Naive thymus-derived CD4-positive, alpha-beta T cell (primary cell): ENCODE measurements at regions of chr3 and their contacts with region 1.

Region 1: GRCh38 chr3:149771652-149772271 is 19.5 kb upstream of the COMMD2 start:
- DNase-seq: peak in 5 of 9 donors; percentile 1 to 30 (median 13)
- ATAC-seq: no peak
- H3K4me3 ChIP-seq: no peak overlapping the region
- H3K4me3 Mint-ChIP-seq: no peak overlapping the region
- H3K27ac ChIP-seq: no peak overlapping the region
- H3K27ac Mint-ChIP-seq: no peak overlapping the region
- H3K4me1 ChIP-seq: no peaks in the 10 kb centered on the region
- H3K4me1 Mint-ChIP-seq: no peaks in the 10 kb centered on the region
- H3K27me3 ChIP-seq: no peaks in the 10 kb centered on the region
- H3K27me3 Mint-ChIP-seq: peaks cover 6 to 17% (median 11%) of the 10 kb centered on the region in 5 donors

Region 2: DNA sequence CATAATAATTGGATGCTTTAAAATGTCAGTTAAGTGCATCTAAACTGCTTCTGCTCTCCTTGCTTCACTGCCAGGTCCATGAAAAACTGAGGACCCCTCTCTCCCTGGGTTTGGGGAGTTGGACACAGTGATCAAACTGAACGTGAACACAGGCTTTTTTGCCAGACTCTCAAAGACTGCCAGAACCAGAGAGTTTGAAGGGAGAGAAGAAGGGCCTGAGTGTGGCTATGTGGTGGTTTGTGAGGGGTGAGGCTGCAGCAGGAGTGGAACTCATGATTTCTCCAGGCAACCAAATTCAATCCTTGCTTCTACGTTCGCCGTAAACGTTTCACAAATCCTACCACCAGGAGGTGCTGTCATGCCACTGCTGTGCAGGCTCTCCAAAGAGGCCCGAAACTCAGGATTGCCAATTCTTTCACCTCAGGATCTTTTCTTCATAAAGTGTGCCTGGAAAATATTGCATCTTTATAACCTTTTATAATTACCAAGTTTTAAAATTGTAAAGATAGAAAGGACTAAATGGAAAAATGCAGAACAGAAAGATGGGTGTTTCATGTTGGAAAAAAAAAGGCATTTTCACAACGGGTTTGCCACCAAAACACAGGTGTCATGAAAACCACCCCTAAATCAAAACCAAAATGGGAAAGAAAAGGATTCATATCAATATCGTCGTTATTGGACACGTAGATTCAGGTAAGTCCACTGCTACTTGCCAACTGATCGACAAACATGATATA is 277.6 kb before region 1 on chr3:
- CTCF ChIA-PET with region 1: no interaction called
- POLR2A ChIA-PET with region 1: no interaction called
- intact Hi-C with region 1: loop called in 1 of 2 experiments (anchors 1 kb)
- DNase-seq: no peak
- ATAC-seq: peak; percentile 55
- H3K4me3 ChIP-seq: no peak overlapping the region
- H3K4me3 Mint-ChIP-seq: no peak overlapping the region
- H3K27ac ChIP-seq: no peak overlapping the region
- H3K27ac Mint-ChIP-seq: no peak overlapping the region
- H3K4me1 ChIP-seq: no peaks in the 10 kb centered on the region
- H3K4me1 Mint-ChIP-seq: peaks cover 0 to 4% (median 0%) of the 10 kb centered on the region in 7 donors
- H3K27me3 ChIP-seq: no peaks in the 10 kb centered on the region
- H3K27me3 Mint-ChIP-seq: peaks cover 15 to 29% (median 20%) of the 10 kb centered on the region in 5 donors

Region 3: DNA sequence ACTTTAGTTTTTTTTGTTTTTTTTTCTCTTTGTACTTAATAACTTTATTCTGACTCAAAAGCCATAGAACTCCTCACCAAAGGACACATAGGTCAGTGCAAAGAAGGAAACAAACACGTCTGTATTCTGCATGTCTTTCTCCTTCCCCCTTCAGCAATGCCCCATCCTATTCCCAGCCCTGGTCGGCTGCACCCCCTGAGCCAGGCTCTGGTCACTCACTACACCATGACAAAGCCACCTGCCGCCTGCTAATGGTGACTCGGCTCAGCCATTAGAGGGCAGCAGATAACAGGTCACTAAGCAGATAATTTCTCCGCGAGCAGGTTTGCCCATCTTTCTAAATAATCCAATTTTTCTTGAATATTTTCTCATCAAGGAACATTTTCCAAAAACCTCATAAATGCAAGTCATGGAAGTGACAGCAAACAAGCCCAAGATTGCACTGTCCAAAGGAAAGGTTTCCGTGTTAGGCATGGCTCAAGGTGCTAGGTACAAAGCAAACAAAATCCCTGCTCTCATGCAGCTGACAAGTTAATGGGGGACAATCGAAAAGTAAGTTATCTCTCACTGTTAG is 259.5 kb before region 1 on chr3:
- CTCF ChIA-PET with region 1: no interaction called
- POLR2A ChIA-PET with region 1: no interaction called
- intact Hi-C with region 1: loop called in 1 of 2 experiments (anchors 5 kb)
- DNase-seq: peak in 1 of 9 donors; percentile 25
- ATAC-seq: peak; percentile 52
- H3K4me3 ChIP-seq: no peak overlapping the region
- H3K4me3 Mint-ChIP-seq: peak overlapping the region in 1 of 10 donors; percentile 37
- H3K27ac ChIP-seq: no peak overlapping the region
- H3K27ac Mint-ChIP-seq: no peak overlapping the region
- H3K4me1 ChIP-seq: no peaks in the 10 kb centered on the region
- H3K4me1 Mint-ChIP-seq: peaks cover 4 to 17% (median 9%) of the 10 kb centered on the region in 7 donors
- H3K27me3 ChIP-seq: no peaks in the 10 kb centered on the region
- H3K27me3 Mint-ChIP-seq: peaks cover 16 to 30% (median 21%) of the 10 kb centered on the region in 5 donors

Region 4: DNA sequence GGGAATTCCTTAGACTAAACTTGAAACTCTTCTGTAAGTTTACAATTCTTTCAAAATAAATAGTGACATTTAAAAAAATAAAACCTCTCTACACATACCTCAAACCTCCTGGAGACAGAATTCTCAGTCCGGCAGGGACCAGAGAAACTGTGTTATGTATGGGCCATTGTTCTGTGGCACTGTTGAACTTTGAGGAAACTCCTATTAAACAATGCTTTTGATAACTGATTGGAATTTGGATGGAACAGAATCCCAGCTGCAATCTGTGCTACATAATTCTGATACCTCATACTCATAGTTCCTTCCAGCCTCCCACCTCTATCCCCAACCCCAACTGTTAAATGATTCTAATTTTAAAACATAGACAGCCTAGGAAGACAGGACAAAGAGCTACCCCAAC is 212.2 kb before region 1 on chr3:
- CTCF ChIA-PET with region 1: no interaction called
- POLR2A ChIA-PET with region 1: no interaction called
- intact Hi-C with region 1: no loop called
- DNase-seq: no peak
- ATAC-seq: no peak
- H3K4me3 ChIP-seq: no peak overlapping the region
- H3K4me3 Mint-ChIP-seq: no peak overlapping the region
- H3K27ac ChIP-seq: no peak overlapping the region
- H3K27ac Mint-ChIP-seq: no peak overlapping the region
- H3K4me1 ChIP-seq: no peaks in the 10 kb centered on the region
- H3K4me1 Mint-ChIP-seq: no peaks in the 10 kb centered on the region
- H3K27me3 ChIP-seq: no peaks in the 10 kb centered on the region
- H3K27me3 Mint-ChIP-seq: peaks cover 12 to 42% (median 27%) of the 10 kb centered on the region in 5 donors

Region 5: DNA sequence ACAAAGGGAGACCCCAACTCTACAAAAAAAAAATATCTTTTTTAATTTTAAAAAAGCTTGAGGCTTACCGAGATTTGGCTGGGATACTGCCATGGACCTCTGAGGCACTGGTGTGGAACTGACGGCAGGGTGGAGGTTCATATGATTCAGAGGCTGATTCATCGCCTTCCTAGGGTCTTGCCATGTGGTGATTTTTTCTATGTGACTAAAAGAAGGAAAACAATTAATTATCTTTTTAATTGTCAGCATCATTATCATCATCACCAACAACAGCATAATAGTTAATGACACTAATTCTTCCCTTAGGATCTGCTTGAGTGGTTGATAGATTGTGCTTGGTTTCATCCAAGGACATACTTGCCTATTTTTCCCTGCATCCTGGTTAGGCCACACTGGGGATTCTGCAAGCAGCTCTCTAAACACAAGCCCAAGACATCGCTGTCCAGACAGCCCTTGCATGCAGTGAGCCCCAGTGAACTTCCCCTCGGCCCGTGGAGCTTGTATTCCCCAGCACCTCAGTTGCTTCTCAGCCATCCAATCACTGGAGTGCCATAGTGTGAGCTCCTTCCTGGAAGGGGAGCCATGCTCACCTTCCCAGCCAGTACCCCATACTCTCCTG is 198.9 kb before region 1 on chr3:
- CTCF ChIA-PET with region 1: no interaction called
- POLR2A ChIA-PET with region 1: no interaction called
- intact Hi-C with region 1: loop called in 1 of 2 experiments (anchors 2 kb)
- DNase-seq: no peak
- ATAC-seq: no peak
- H3K4me3 ChIP-seq: no peak overlapping the region
- H3K4me3 Mint-ChIP-seq: no peak overlapping the region
- H3K27ac ChIP-seq: no peak overlapping the region
- H3K27ac Mint-ChIP-seq: peak overlapping the region in 1 of 9 donors; percentile 38
- H3K4me1 ChIP-seq: no peaks in the 10 kb centered on the region
- H3K4me1 Mint-ChIP-seq: peaks cover 0 to 27% (median 0%) of the 10 kb centered on the region in 7 donors
- H3K27me3 ChIP-seq: no peaks in the 10 kb centered on the region
- H3K27me3 Mint-ChIP-seq: peaks cover 0 to 6% (median 0%) of the 10 kb centered on the region in 5 donors

Region 6: GRCh38 chr3:149820180-149820579 is 48.4 kb after region 1 on chr3:
- CTCF ChIA-PET with region 1: no interaction called
- POLR2A ChIA-PET with region 1: no interaction called
- intact Hi-C with region 1: no loop called
- DNase-seq: no peak
- ATAC-seq: no peak
- H3K4me3 ChIP-seq: no peak overlapping the region
- H3K4me3 Mint-ChIP-seq: peak overlapping the region in 2 of 10 donors; percentile 30 to 45
- H3K27ac ChIP-seq: no peak overlapping the region
- H3K27ac Mint-ChIP-seq: peak overlapping the region in 1 of 9 donors; percentile 19
- H3K4me1 ChIP-seq: peaks cover 0 to 21% of the 10 kb centered on the region in 2 donors
- H3K4me1 Mint-ChIP-seq: peaks cover 30 to 89% (median 82%) of the 10 kb centered on the region in 7 donors
- H3K27me3 ChIP-seq: no peaks in the 10 kb centered on the region
- H3K27me3 Mint-ChIP-seq: no peaks in the 10 kb centered on the region